OCI-LY7 (cell line): ENCODE measurements at regions of chr4 and their contacts with region 1.

Region 1: DNA sequence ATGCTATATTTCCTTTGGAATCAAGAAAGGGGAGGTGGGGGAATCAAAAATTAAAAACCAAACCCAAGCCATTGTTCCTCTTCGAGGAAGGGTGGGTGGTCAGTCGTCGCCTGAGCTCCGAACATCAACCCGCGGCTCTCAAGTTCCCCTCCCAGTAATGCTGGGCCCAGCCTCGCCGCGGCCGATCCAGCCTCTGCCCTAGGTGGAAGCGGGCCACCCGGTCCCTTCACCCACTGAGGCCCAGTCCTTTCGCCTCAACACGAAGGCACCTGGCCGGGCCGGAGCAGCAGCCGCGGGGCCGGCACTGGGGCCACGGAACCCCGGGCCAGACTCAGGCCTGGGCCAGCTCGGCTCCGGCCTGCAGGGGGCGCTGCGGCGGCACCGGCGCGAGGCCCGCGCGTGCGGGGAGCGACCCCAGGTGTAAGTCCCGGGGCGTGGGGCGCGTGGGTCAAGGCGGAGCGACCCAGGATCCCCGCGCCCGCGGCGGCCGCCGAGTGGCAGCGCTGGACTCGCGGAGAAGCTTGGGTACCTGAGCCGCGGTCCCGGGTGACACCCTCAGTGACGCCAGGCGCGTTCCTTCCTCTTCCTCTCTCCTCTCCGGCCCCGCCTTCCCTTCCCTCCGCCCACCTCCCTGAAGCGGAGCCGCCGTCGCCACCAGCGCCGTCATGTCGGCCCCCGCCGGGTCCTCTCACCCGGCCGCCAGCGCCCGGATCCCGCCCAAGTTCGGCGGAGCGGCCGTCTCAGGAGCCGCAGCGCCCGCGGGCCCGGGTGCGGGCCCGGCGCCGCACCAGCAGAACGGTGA is at the start of gene SEC24B:
- DNase-seq: peak; percentile 89
- H3K4me3 ChIP-seq: peak within 1 kb of the TSS; percentile 93
- H3K27ac ChIP-seq: peak within 1 kb of the TSS; percentile 28
- H3K4me1 ChIP-seq: peaks cover 22% of the 10 kb centered on the region
- CTCF ChIP-seq: peak; percentile 85
- total RNA-seq, gene SEC24B: 8.7 and 13.1 TPM in 2 replicates

Region 2: DNA sequence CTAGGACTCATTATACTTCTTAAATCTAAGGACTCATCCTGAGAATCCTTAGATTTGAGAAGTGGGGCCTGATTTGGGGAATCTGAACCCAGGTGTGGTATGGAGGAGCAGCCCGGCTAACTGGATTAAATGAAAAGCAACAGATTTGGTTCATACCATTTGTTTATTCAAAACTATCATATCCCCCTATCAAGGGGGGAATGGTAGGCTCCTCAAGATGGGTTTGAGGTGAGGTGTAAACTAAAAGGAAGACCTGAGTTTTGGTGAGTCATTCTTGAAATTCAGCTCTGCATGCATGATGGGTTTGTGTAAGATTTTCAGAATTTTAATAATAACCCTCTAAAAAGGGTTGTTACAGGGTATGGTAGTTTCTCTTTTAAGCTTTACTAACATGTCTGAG is 216.5 kb after region 1 on chr4:
- CTCF ChIA-PET with region 1: no interaction called
- POLR2A ChIA-PET with region 1: interaction called, 5 read pairs
- intact Hi-C with region 1: loop called (anchors 5 kb)
- DNase-seq: peak; percentile 6
- H3K4me3 ChIP-seq: no peak overlapping the region
- H3K27ac ChIP-seq: no peak overlapping the region
- H3K4me1 ChIP-seq: no peaks in the 10 kb centered on the region
- CTCF ChIP-seq: no peak

Region 3: GRCh38 chr4:109702950-109703663 is 269.7 kb after region 1 on chr4 and contains the start of gene CASP6:
- CTCF ChIA-PET with region 1: no interaction called
- POLR2A ChIA-PET with region 1: no interaction called
- intact Hi-C with region 1: loop called (anchors 2 kb)
- DNase-seq: peak; percentile 80
- H3K4me3 ChIP-seq: peak within 1 kb of the TSS; percentile 75
- H3K27ac ChIP-seq: no peak within 1 kb of the TSS
- H3K4me1 ChIP-seq: peaks cover 18% of the 10 kb centered on the region
- CTCF ChIP-seq: peak; percentile 75
- total RNA-seq, gene CASP6: 8.1 and 10.1 TPM in 2 replicates

Region 4: GRCh38 chr4:109729718-109730618 is 296.6 kb after region 1 on chr4 and contains the start of gene PLA2G12A:
- CTCF ChIA-PET with region 1: no interaction called
- POLR2A ChIA-PET with region 1: interaction called, 3 read pairs
- intact Hi-C with region 1: loop called (anchors 5 kb)
- DNase-seq: peak; percentile 85
- H3K4me3 ChIP-seq: peak within 1 kb of the TSS; percentile 79
- H3K27ac ChIP-seq: no peak within 1 kb of the TSS
- H3K4me1 ChIP-seq: peaks cover 21% of the 10 kb centered on the region
- CTCF ChIP-seq: no peak
- total RNA-seq, gene PLA2G12A: 9.0 and 18.1 TPM in 2 replicates

Region 5: GRCh38 chr4:109815151-109816081 is 382.0 kb after region 1 on chr4 and contains the start of gene GAR1:
- CTCF ChIA-PET with region 1: no interaction called
- POLR2A ChIA-PET with region 1: interaction called, 3 read pairs
- intact Hi-C with region 1: loop called (anchors 2 kb)
- DNase-seq: peak; percentile 95
- H3K4me3 ChIP-seq: peak within 1 kb of the TSS; percentile 83
- H3K27ac ChIP-seq: peak within 1 kb of the TSS; percentile 65
- H3K4me1 ChIP-seq: peaks cover 22% of the 10 kb centered on the region
- CTCF ChIP-seq: no peak
- total RNA-seq, gene GAR1: 16.4 and 26.7 TPM in 2 replicates

Region 6: GRCh38 chr4:109990261-109991257 is 557.2 kb after region 1 on chr4:
- CTCF ChIA-PET with region 1: no interaction called
- POLR2A ChIA-PET with region 1: no interaction called
- intact Hi-C with region 1: loop called (anchors 5 kb)
- DNase-seq: peak; percentile 95
- H3K4me3 ChIP-seq: peak overlapping the region; percentile 17
- H3K27ac ChIP-seq: peak overlapping the region; percentile 97
- H3K4me1 ChIP-seq: peaks cover 88% of the 10 kb centered on the region
- CTCF ChIP-seq: no peak